CD8-positive, alpha-beta T cell (primary cell): ENCODE measurements at regions of chr1 and their contacts with region 1.

Region 1: DNA sequence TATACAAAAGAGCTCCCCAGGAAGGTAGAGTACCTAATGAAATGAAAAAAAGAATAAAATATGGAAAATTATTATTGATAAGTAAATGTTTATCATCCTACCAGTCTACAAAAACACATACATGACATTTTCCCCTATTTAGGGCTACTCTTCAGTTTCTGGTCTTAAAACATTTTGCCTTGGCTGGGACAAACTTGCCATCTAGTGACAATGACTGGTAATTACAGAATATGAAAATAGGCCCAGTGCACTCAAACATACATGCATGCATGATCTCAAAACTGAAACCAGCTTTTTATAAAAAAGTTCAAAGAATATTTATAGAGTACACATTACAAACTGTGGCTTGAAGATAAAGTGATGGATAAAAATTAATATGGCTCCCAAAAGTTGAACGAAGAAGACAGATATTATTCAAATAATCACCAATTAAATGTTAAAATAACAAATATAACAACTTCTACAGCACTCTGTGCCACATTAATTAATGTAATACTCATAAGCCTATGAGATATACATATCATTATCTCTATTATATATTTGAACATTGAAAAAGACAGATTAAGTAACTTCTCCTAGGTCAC is 10.5 kb upstream of the RNPC3 start:
- DNase-seq: peak in 3 of 9 experiments; percentile 6 to 70 (median 59)
- ATAC-seq: peak; percentile 95
- H3K4me3 ChIP-seq: no peak overlapping the region
- H3K4me3 Mint-ChIP-seq: no peak overlapping the region
- H3K27ac ChIP-seq: no peak overlapping the region
- H3K27ac Mint-ChIP-seq: no peak overlapping the region
- H3K4me1 ChIP-seq: no peaks in the 10 kb centered on the region
- H3K4me1 Mint-ChIP-seq: peaks cover 4% of the 10 kb centered on the region
- H3K27me3 ChIP-seq: no peaks in the 10 kb centered on the region
- H3K27me3 Mint-ChIP-seq: no peaks in the 10 kb centered on the region
- CTCF ChIP-seq: peak; percentile 90

Region 2: GRCh38 chr1:101520302-101520701 is 1994.7 kb before region 1 on chr1:
- CTCF ChIA-PET with region 1: interaction called, 3 read pairs
- POLR2A ChIA-PET with region 1: no interaction called
- intact Hi-C with region 1: loop called in 1 of 2 experiments (anchors 2 kb)
- DNase-seq: peak in 2 of 9 experiments; percentile 45 to 54
- ATAC-seq: peak; percentile 48
- H3K4me3 ChIP-seq: no peak overlapping the region
- H3K4me3 Mint-ChIP-seq: no peak overlapping the region
- H3K27ac ChIP-seq: no peak overlapping the region
- H3K27ac Mint-ChIP-seq: no peak overlapping the region
- H3K4me1 ChIP-seq: no peaks in the 10 kb centered on the region
- H3K4me1 Mint-ChIP-seq: peaks cover 6% of the 10 kb centered on the region
- H3K27me3 ChIP-seq: no peaks in the 10 kb centered on the region
- H3K27me3 Mint-ChIP-seq: no peaks in the 10 kb centered on the region
- CTCF ChIP-seq: peak; percentile 47

Region 3: GRCh38 chr1:101769520-101769919 is 1745.5 kb before region 1 on chr1:
- CTCF ChIA-PET with region 1: no interaction called
- POLR2A ChIA-PET with region 1: no interaction called
- intact Hi-C with region 1: loop called in 1 of 2 experiments (anchors 10 kb)
- DNase-seq: peak in 2 of 9 experiments; percentile 1 to 2
- ATAC-seq: no peak
- H3K4me3 ChIP-seq: no peak overlapping the region
- H3K4me3 Mint-ChIP-seq: no peak overlapping the region
- H3K27ac ChIP-seq: no peak overlapping the region
- H3K27ac Mint-ChIP-seq: no peak overlapping the region
- H3K4me1 ChIP-seq: no peaks in the 10 kb centered on the region
- H3K4me1 Mint-ChIP-seq: no peaks in the 10 kb centered on the region
- H3K27me3 ChIP-seq: no peaks in the 10 kb centered on the region
- H3K27me3 Mint-ChIP-seq: no peaks in the 10 kb centered on the region
- CTCF ChIP-seq: peak; percentile 20

Region 4: GRCh38 chr1:103496014-103496635 is 18.9 kb before region 1 on chr1:
- CTCF ChIA-PET with region 1: no interaction called
- POLR2A ChIA-PET with region 1: no interaction called
- intact Hi-C with region 1: no loop called
- DNase-seq: no peak
- ATAC-seq: no peak
- H3K4me3 ChIP-seq: no peak overlapping the region
- H3K4me3 Mint-ChIP-seq: no peak overlapping the region
- H3K27ac ChIP-seq: no peak overlapping the region
- H3K27ac Mint-ChIP-seq: no peak overlapping the region
- H3K4me1 ChIP-seq: no peaks in the 10 kb centered on the region
- H3K4me1 Mint-ChIP-seq: no peaks in the 10 kb centered on the region
- H3K27me3 ChIP-seq: no peaks in the 10 kb centered on the region
- H3K27me3 Mint-ChIP-seq: peaks cover 20% of the 10 kb centered on the region
- CTCF ChIP-seq: no peak

Region 5: DNA sequence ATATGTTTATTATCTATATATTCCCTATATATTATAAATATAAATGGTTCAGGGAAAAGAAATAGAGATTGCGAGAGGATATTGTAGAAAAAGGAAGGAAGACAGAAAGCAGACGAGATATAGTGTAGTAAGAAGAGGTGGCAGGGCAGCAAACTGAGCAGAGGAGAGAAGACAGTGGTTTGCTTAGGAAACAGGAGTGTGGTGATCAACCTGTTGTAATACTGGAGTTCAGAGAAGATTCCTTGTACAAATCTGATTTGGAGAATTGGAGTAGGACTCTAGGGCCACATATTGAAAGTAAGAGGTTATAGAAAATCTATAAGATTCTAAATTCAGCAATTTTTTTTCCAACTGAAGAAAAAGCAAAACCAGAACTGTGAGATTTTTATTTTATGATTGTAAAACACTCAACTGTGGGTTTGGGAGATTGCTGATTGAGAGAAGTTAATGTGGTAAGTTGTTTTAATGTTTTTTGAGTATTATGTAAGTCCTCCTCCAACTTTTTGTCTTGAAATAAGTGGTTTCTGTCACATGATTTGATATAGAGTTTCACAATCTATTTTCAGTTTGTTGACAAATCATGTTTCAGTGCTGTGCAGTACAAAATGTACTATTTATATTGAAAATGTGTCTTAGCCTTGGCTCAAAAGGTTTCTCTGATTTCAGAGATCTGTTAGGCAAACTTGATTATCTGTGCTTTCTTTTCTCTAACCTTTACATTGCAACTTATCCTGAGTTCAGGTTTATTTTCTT is 46.8 kb after region 1 on chr1:
- CTCF ChIA-PET with region 1: no interaction called
- POLR2A ChIA-PET with region 1: no interaction called
- intact Hi-C with region 1: no loop called
- DNase-seq: no peak
- ATAC-seq: no peak
- H3K4me3 ChIP-seq: no peak overlapping the region
- H3K4me3 Mint-ChIP-seq: no peak overlapping the region
- H3K27ac ChIP-seq: no peak overlapping the region
- H3K27ac Mint-ChIP-seq: peak overlapping the region; percentile 65
- H3K4me1 ChIP-seq: no peaks in the 10 kb centered on the region
- H3K4me1 Mint-ChIP-seq: peaks cover 2% of the 10 kb centered on the region
- H3K27me3 ChIP-seq: no peaks in the 10 kb centered on the region
- H3K27me3 Mint-ChIP-seq: no peaks in the 10 kb centered on the region
- CTCF ChIP-seq: no peak

Region 6: DNA sequence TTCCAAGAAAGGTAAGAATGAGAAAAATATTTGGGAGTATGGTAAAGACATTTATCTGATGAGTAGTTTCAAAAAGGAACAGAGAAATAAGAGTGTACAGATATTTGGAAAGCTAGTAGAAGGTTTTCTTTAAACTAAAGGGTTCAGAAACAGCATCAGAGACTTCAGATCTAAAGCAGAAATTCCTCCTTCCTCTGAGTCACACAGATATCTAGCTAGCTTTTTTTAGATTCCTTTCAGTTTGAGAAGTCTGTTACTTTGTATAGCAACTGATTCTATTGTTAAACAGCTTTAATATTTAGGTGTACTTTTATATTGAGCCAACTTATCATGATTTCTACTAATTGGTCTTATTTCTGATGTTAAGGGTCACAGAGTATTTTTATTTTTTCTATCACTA is 61.1 kb after region 1 on chr1:
- CTCF ChIA-PET with region 1: no interaction called
- POLR2A ChIA-PET with region 1: no interaction called
- intact Hi-C with region 1: no loop called
- DNase-seq: no peak
- ATAC-seq: no peak
- H3K4me3 ChIP-seq: no peak overlapping the region
- H3K4me3 Mint-ChIP-seq: no peak overlapping the region
- H3K27ac ChIP-seq: no peak overlapping the region
- H3K27ac Mint-ChIP-seq: no peak overlapping the region
- H3K4me1 ChIP-seq: no peaks in the 10 kb centered on the region
- H3K4me1 Mint-ChIP-seq: no peaks in the 10 kb centered on the region
- H3K27me3 ChIP-seq: no peaks in the 10 kb centered on the region
- H3K27me3 Mint-ChIP-seq: no peaks in the 10 kb centered on the region
- CTCF ChIP-seq: no peak